ENCODE measurements at regions of chr9 and their contacts with region 1.

Region 1: GRCh38 chr9:96875461-96876364 is 21.4 kb upstream of the ZNF782 start:
- DNase-seq: peak; percentile 94
- ATAC-seq: peak; percentile 96
- H3K4me3 Mint-ChIP-seq: peak overlapping the region; percentile 76
- H3K27ac Mint-ChIP-seq: no peak overlapping the region
- H3K4me1 Mint-ChIP-seq: peaks cover 17% of the 10 kb centered on the region
- H3K27me3 Mint-ChIP-seq: peaks cover 87% of the 10 kb centered on the region
- CTCF ChIP-seq: peak; percentile 66

Region 2: DNA sequence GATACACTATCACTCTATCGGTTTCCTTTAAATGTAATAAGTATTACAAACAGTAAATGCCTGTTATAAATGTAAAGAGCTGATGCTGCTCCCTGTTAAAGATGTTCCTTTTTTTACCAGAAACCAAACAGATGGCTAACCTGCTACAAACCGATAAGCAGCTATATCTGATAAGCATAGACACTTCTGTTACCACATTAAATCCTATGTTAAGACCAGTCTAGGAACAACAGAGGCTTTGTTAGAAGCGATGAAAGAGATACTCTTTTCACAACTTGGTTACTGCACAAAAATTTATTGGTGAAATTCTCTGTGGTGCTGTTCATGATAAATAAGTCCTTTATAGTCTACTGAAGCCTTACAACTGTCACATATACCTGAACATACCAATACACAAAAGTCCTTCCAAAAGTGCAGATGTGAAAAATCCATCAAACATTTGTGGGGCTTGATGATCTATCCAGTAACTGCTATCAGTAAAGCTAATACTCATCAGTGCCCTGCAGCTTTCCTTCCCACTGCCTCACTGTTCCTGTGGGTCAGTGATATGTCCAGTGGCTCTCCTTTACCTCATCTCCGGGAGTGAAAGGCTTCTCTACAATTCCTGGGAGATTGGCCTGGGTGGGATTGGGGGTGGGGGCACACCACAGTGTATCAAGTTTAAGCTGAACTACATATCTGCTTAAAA is 194.8 kb before region 1 on chr9:
- CTCF ChIA-PET with region 1: no interaction called
- POLR2A ChIA-PET with region 1: no interaction called
- DNase-seq: no peak
- ATAC-seq: no peak
- H3K4me3 Mint-ChIP-seq: no peak overlapping the region
- H3K27ac Mint-ChIP-seq: no peak overlapping the region
- H3K4me1 Mint-ChIP-seq: no peaks in the 10 kb centered on the region
- H3K27me3 Mint-ChIP-seq: no peaks in the 10 kb centered on the region; the same call in 1 of the 2 replicates
- CTCF ChIP-seq: no peak

Region 3: GRCh38 chr9:96854073-96854876 is 21.4 kb before region 1 on chr9 and contains the start of gene ZNF782:
- CTCF ChIA-PET with region 1: interaction called, 34 read pairs
- POLR2A ChIA-PET with region 1: interaction called, 4 read pairs
- DNase-seq: peak; percentile 96
- ATAC-seq: peak; percentile 94
- H3K4me3 Mint-ChIP-seq: peak within 1 kb of the TSS; percentile 98
- H3K27ac Mint-ChIP-seq: peak within 1 kb of the TSS; percentile 96
- H3K4me1 Mint-ChIP-seq: peaks cover 44% of the 10 kb centered on the region
- H3K27me3 Mint-ChIP-seq: no peaks in the 10 kb centered on the region; the same call in 1 of the 2 replicates
- CTCF ChIP-seq: no peak
- total RNA-seq, gene ZNF782: 4.4 to 6.2 TPM (median 5.2 TPM) in 3 replicates

Region 4: GRCh38 chr9:96859461-96860198 is 16.1 kb before region 1 on chr9:
- CTCF ChIA-PET with region 1: interaction called, 34 read pairs
- POLR2A ChIA-PET with region 1: interaction called, 4 read pairs
- DNase-seq: no peak
- ATAC-seq: peak; percentile 19; the same call in 1 of the 2 replicates
- H3K4me3 Mint-ChIP-seq: no peak overlapping the region
- H3K27ac Mint-ChIP-seq: no peak overlapping the region
- H3K4me1 Mint-ChIP-seq: peaks cover 38% of the 10 kb centered on the region
- H3K27me3 Mint-ChIP-seq: peaks cover 4% of the 10 kb centered on the region; the same call in 1 of the 2 replicates
- CTCF ChIP-seq: no peak